ENCODE measurements at regions of chr1 and their contacts with region 1.

Region 1: DNA sequence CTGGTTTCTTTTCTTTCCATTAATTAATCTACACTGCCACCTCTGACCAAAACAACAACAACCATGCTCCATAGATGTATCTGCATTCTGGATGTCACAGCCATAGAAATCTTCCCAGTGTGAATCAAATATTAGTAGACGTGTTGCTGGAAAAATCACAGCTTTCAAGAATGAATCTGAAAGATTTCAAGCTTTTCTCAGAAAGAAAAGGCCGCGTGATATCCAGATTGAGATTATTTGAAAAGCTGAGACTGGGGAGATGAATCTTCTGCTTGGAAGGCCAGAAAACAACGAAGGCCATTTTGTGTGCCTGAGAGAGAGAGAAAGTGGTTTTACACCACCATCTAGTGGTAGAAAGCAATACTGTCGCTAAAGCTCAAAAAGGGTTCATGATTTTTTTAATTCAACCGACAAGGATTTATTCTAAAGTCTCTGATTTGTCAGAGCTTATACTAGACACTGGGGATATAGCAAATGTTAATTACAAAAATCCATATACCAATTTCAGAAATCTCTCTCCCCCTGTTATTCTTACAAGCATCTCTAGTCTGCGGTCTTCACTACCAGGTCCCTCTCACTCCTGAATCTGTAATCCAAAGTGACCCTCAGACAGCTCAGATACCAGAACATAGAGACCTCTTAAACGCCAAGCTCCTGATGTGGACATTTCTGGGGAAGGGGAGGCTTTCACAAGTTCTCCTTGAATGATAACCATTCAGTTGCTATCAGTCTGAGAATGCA is 87.5 kb upstream of the SGIP1 start:
- DNase-seq: peak in 4 of 5 donors; percentile 13 to 70 (median 60)
- H3K4me3 ChIP-seq: peak overlapping the region; percentile 46
- H3K4me3 Mint-ChIP-seq: peak overlapping the region; percentile 8 to 86 (median 67)
- H3K27ac ChIP-seq: no peak overlapping the region
- H3K27ac Mint-ChIP-seq: peak overlapping the region; percentile 43 to 96 (median 90)
- H3K4me1 ChIP-seq: peaks cover 13% of the 10 kb centered on the region
- H3K4me1 Mint-ChIP-seq: peaks cover 18 to 24% (median 21%) of the 10 kb centered on the region in 3 donors
- H3K27me3 ChIP-seq: no peaks in the 10 kb centered on the region
- H3K27me3 Mint-ChIP-seq: peaks cover 2 to 9% of the 10 kb centered on the region in 2 donors

Region 2: DNA sequence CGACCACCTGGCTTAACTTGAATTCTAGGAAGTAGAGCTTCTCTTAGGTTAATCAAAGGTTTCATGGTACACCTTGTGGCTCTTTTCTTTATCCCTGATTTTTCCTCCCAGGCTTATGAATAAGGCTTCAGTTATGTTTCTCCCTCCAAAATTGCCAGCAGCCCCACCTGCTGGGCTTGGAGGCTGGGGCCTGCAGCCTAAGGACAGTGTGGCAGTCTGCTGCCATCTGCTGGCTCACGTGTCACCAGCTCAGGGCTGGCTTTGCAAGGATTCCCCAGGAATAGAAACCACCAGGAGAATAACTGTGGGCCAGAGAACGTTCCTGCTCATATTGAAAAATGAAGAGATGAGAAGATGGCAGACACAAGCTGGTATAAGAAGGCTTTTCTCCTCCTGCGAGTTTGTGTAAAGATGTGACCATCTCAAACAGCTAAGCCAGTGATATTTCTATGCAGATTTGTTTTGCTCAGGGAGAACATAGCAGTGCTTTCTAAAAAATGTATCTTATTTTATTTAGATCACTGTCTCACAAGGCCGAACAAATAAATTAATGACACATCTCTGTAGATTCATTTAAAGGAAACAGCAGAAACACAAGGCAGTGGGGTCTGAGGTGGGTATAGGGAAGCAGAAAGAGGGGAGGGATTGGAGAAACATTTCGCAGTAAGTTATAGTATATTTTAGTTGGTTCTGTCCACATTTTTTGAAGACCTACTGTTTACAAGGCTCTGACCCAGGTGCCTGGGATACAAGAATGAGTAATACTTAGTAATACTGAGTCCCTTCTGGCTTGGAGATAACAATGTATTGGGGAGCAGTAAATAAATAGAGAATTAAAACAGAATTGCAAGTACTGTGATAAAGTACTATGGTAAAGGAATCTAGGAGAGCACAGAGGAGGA is 203.5 kb before region 1 on chr1:
- CTCF ChIA-PET with region 1: interaction called, 272 read pairs
- POLR2A ChIA-PET with region 1: no interaction called
- DNase-seq: peak; percentile 46 to 77 (median 60)
- H3K4me3 ChIP-seq: no peak overlapping the region
- H3K4me3 Mint-ChIP-seq: no peak overlapping the region
- H3K27ac ChIP-seq: no peak overlapping the region
- H3K27ac Mint-ChIP-seq: no peak overlapping the region
- H3K4me1 ChIP-seq: peaks cover 26% of the 10 kb centered on the region
- H3K4me1 Mint-ChIP-seq: peaks cover 0 to 29% (median 19%) of the 10 kb centered on the region in 3 donors
- H3K27me3 ChIP-seq: no peaks in the 10 kb centered on the region
- H3K27me3 Mint-ChIP-seq: peaks cover 7 to 8% of the 10 kb centered on the region in 2 donors

Region 3: DNA sequence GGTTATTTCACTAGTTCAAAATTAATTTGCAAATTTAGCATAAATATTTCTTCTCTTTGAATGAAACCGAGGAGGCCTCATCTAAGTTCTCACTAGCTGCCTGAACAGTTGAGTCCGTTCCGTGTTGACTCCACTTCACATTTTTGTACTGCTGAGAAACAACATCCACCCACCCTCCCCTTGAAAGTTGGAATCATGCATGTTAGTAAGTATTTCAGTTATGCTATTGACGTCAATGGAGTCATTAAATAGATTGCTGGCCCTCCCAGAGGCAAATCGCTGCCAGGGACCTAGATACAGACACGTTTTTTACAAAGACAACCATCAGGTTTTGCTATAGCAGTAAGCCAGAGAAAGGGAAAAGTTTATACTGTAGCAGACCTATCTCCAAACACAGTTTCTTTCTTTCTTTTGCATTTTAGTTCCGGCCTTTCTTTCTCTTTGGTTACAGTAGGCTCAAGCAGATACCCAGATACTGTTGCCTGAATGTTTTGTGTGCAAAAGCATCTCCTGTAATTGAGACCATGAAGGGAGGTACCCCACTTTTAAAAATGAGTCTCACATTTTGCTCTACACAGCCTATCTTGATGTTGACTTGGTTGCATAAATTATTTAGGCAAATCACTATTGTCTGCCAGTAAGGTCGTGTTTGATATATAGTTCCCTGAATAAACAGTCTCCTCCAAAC is 175.1 kb before region 1 on chr1:
- CTCF ChIA-PET with region 1: interaction called, 25 read pairs
- POLR2A ChIA-PET with region 1: interaction called, 4 read pairs
- DNase-seq: peak in 1 of 5 donors; percentile 19
- H3K4me3 ChIP-seq: no peak overlapping the region
- H3K4me3 Mint-ChIP-seq: no peak overlapping the region
- H3K27ac ChIP-seq: no peak overlapping the region
- H3K27ac Mint-ChIP-seq: peak overlapping the region in 4 of 8 donors; percentile 11 to 69 (median 30)
- H3K4me1 ChIP-seq: peaks cover 38% of the 10 kb centered on the region
- H3K4me1 Mint-ChIP-seq: peaks cover 37 to 51% (median 49%) of the 10 kb centered on the region in 3 donors
- H3K27me3 ChIP-seq: no peaks in the 10 kb centered on the region
- H3K27me3 Mint-ChIP-seq: peaks cover 0 to 2% of the 10 kb centered on the region in 2 donors

Region 4: GRCh38 chr1:66300972-66301451 is 145.4 kb before region 1 on chr1:
- CTCF ChIA-PET with region 1: interaction called, 11 read pairs
- POLR2A ChIA-PET with region 1: no interaction called
- DNase-seq: peak in 3 of 5 donors; percentile 49 to 62 (median 52)
- H3K4me3 ChIP-seq: peak overlapping the region; percentile 4
- H3K4me3 Mint-ChIP-seq: peak overlapping the region; percentile 11 to 92 (median 82)
- H3K27ac ChIP-seq: peak overlapping the region; percentile 17
- H3K27ac Mint-ChIP-seq: peak overlapping the region; percentile 83 to 99 (median 94)
- H3K4me1 ChIP-seq: peaks cover 32% of the 10 kb centered on the region
- H3K4me1 Mint-ChIP-seq: peaks cover 30 to 46% (median 44%) of the 10 kb centered on the region in 3 donors
- H3K27me3 ChIP-seq: no peaks in the 10 kb centered on the region
- H3K27me3 Mint-ChIP-seq: no peaks in the 10 kb centered on the region

Measured in CD8-positive, alpha-beta memory T cell (primary cell).